Naive thymus-derived CD8-positive, alpha-beta T cell (primary cell): ENCODE measurements at regions of chr5 and their contacts with region 1.

Region 1: DNA sequence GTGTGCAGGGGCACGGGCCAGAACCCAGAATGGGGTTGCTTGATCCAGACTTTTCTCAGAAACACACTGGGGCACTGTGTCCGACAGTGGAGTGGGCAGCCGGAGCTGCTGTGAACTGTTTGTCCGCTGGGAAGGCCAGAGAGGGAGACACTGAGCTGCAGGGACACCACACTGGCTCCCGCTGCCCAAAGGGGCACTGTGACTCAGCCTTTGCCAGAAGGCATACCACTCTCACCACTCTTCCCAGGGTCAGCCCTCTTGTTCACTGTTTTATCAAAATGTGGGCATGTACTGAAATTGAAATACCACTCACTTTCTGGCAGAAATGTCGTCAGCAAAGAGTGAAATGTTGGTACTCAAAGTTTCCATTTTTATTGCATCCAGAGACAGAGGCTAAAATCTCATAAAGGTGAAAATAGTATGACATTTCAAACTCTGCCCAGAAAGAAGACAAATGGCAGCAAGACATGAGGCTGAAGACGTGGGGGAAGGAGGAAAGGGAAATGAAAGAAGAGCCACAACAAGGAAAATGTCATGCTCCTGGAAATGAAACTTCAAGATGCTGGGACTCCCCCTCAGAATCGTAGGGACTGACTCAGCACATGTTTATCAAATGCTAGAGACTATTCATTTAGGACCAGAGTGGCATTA is 4.5 kb upstream of the IL7R start:
- DNase-seq: peak in 7 of 10 donors; percentile 28 to 64 (median 45)
- ATAC-seq: peak in 1 of 2 donors; percentile 1
- H3K4me3 Mint-ChIP-seq: peak overlapping the region; percentile 82 to 97 (median 90)
- H3K27ac Mint-ChIP-seq: peak overlapping the region; percentile 95 to 100 (median 100)
- H3K4me1 Mint-ChIP-seq: peaks cover 23 to 80% (median 72%) of the 10 kb centered on the region in 4 donors
- H3K27me3 Mint-ChIP-seq: no peaks in the 10 kb centered on the region

Region 2: DNA sequence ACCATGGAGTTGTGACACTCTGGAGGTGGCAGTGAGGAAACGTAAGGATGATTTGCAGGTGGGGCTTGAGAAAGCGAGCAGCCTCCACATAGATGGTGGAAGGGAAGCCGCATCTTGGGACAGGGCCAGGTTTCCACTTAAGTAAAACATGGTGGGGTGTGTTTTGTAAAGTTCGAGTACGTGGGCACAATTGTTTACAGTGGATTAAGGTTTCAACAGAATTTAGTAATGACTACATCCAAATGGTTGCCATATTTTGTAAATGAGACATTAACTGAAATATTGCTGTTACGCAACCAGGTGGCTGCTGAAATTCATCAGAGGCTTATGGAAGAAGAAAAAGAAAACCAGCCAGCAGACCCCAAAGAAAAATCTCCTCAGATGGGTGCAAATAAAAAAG is 80.9 kb before region 1 on chr5:
- POLR2A ChIA-PET with region 1: interaction called, 431 read pairs
- DNase-seq: no peak
- ATAC-seq: no peak
- H3K4me3 Mint-ChIP-seq: peak overlapping the region in 8 of 10 donors; percentile 24 to 71 (median 56)
- H3K27ac Mint-ChIP-seq: peak overlapping the region; percentile 7 to 93 (median 81)
- H3K4me1 Mint-ChIP-seq: peaks cover 29 to 55% (median 36%) of the 10 kb centered on the region in 4 donors
- H3K27me3 Mint-ChIP-seq: no peaks in the 10 kb centered on the region

Region 3: DNA sequence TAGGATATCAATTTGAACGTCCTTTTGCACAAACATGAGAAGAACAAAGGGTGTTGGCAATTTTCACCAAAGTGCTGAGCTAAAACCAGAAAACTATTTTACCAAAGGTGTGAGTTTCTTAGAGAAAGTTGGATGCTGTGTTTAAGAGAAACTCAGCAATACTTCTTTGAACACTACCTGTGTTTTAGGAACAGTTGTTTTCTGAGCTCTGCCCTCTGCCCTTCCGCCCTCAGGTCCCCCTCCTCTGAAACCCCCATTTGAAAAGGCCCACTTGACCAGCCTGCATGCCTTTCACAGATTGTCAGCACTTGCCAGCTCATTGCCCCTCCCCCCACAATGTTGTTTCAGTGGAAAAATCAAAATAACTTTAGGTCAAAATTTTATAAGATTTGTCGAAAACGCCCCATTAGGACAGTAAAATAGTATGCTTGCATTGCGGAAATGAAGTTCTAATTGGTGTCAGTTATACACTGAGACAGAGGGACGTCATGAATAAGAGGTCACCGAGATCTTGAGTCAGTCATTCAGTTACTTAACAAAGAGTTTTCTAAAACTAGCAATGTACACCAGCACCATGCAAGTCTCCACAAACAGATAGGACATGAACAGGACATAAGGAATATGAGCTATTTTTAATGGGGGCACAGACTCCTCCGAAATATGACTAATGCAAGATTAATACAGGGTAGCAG is 57.4 kb before region 1 on chr5:
- POLR2A ChIA-PET with region 1: interaction called, 431 read pairs
- DNase-seq: no peak
- ATAC-seq: no peak
- H3K4me3 Mint-ChIP-seq: peak overlapping the region in 3 of 10 donors; percentile 9 to 20 (median 11)
- H3K27ac Mint-ChIP-seq: peak overlapping the region in 9 of 10 donors; percentile 18 to 99 (median 77)
- H3K4me1 Mint-ChIP-seq: peaks cover 38 to 75% (median 71%) of the 10 kb centered on the region in 4 donors
- H3K27me3 Mint-ChIP-seq: no peaks in the 10 kb centered on the region

Region 4: DNA sequence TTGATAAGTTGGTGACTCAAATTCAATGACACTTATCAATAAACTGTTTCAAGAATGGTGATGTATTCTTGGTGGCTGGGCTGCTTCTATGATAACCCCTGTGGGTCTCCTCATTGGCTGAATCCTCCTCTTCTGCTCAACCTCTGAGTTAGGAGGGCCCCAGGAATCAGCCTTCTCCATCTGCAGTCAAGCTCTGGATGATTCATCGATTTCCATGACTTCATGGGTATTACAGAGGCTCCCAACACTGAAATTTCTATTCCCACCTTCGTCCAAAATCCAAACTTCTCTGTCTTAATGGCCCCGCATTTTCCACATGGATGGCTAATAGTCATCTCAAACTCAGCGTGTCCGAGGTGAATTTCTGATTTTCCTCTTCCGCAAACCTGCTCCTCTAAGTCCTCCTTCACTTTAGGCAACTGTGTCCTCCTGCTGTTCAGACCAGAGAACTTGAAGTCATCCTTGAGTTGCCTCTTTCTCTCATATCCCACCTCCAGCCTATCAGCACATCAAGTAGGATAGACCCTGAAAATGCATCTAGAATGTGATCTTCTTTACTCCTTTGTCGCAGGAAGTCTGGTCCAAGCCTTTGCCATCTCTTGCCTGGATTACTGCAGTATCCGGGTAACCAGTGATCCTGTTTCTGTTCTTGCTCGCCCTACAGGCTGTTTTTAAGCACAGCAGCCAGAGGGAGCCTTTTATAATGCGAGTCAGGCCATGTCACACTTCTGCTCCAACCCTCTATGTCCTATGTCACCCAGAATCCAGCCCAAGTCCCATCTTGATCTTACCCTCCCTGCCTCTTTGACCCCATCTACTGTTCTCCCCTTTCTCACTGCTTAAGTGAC is 36.9 kb before region 1 on chr5:
- POLR2A ChIA-PET with region 1: interaction called, 989 read pairs
- DNase-seq: peak in 3 of 10 donors; percentile 27 to 65 (median 33)
- ATAC-seq: no peak
- H3K4me3 Mint-ChIP-seq: no peak overlapping the region
- H3K27ac Mint-ChIP-seq: no peak overlapping the region
- H3K4me1 Mint-ChIP-seq: peaks cover 19 to 53% (median 35%) of the 10 kb centered on the region in 4 donors
- H3K27me3 Mint-ChIP-seq: no peaks in the 10 kb centered on the region

Region 5: DNA sequence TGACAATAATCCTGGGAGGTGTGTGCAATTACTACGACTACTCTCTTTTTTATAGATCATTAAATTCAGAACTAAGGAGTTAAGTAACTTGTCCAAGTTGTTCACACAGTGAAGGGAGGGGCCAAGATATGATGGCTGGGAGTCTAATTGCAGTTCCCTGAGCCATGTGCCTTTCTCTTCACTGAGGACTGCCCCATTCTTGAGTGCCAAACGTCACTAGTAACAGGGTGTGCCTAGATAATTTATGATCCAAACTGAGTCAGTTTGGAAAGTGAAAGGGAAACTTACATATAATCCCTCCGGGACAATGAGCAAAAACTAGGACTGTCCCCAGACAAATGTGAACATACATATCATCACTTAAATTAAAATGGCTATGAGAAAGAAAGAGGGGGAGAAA is 24.7 kb after region 1 on chr5:
- POLR2A ChIA-PET with region 1: interaction called, 250 read pairs
- DNase-seq: no peak
- ATAC-seq: no peak
- H3K4me3 Mint-ChIP-seq: peak overlapping the region in 8 of 10 donors; percentile 15 to 78 (median 42)
- H3K27ac Mint-ChIP-seq: peak overlapping the region; percentile 82 to 97 (median 86)
- H3K4me1 Mint-ChIP-seq: peaks cover 44 to 92% (median 88%) of the 10 kb centered on the region in 4 donors
- H3K27me3 Mint-ChIP-seq: no peaks in the 10 kb centered on the region

Region 6: DNA sequence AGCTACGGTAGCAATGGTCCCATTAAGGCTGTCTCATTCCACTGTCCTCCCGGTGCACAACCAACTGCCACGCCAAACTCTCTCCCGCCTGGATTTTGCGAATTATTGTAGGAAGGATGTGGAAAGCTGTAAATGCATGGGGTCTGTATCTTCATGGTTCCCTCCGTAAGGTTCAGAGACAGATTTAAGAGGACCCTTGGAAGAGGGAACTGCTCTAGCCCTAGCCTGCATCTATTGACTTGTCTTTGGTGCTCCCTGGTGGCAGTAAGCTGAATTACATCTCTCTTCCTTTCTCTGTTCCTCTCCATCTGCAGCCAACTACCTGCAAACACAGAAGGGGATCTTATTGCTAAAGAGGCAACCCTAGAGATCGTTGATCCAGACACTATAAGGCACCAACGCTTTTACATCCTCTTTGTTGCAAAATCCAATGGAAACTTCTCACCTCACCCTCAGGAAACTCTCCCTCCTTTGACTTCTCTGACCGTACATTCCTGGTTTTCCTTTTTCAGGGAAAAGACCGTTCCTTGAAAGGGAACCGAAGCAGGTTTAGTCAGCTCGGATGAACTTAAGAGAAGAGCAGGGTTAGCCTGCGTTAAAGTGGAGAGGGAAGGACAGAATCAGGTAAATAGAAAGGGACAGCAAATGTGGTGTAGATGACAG is 74.3 kb after region 1 on chr5:
- POLR2A ChIA-PET with region 1: interaction called, 21 read pairs
- DNase-seq: peak; percentile 17 to 83 (median 68)
- ATAC-seq: peak; percentile 45 to 52
- H3K4me3 Mint-ChIP-seq: peak overlapping the region in 9 of 10 donors; percentile 14 to 87 (median 77)
- H3K27ac Mint-ChIP-seq: peak overlapping the region in 6 of 10 donors; percentile 12 to 93 (median 74)
- H3K4me1 Mint-ChIP-seq: peaks cover 25 to 38% (median 34%) of the 10 kb centered on the region in 4 donors
- H3K27me3 Mint-ChIP-seq: peaks cover 0 to 8% (median 1%) of the 10 kb centered on the region in 5 donors

Region 7: DNA sequence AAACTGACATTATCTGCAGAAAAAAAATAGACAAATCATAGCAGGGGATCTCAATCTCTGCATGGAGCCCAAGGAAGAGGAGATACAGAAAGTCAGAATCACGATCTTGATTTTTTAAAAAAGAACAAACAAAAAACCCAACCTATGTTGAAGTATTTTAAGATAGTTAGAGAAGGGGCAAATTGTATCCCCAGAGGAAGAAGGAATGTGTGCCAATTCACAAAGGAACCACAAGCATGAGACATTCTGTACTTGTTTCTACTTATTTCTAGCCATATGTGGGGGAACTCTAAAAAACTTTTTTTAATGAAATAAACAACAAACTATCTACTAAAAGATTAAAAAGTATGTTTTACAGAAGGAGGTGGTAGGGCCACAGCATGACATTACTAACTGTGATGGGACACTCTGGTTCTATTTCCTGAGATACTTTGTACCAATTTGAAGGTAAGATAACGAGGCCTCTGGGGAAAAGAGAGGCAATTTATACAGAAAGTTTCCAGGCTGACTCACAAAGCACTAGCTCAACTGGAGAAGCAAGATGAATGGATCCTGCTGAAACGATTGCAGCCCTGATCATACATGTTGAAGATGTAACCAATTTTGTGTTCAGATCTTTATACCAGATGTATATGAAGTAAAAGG is 427.0 kb after region 1 on chr5:
- POLR2A ChIA-PET with region 1: no interaction called
- DNase-seq: no peak
- ATAC-seq: no peak
- H3K4me3 Mint-ChIP-seq: no peak overlapping the region
- H3K27ac Mint-ChIP-seq: peak overlapping the region in 1 of 10 donors; percentile 32
- H3K4me1 Mint-ChIP-seq: peaks cover 0 to 3% (median 0%) of the 10 kb centered on the region in 4 donors
- H3K27me3 Mint-ChIP-seq: peaks cover 0 to 11% (median 0%) of the 10 kb centered on the region in 5 donors